Activated T-helper 1 cell treated with anti-CD3 and anti-CD28 coated beads, Interleukin-12 subunit alpha, Interleukin-12 subunit beta, Interleukin-2, Interleukin-4 antibody, amounts not matched to agents 30 ng/mL and 10 ng/mL and 1 ng/mL, durations not matched to agents 14 hours and 24 hours and 36 hours (primary cell): ENCODE measurements at regions of chr18 and their contacts with region 1.

Region 1: DNA sequence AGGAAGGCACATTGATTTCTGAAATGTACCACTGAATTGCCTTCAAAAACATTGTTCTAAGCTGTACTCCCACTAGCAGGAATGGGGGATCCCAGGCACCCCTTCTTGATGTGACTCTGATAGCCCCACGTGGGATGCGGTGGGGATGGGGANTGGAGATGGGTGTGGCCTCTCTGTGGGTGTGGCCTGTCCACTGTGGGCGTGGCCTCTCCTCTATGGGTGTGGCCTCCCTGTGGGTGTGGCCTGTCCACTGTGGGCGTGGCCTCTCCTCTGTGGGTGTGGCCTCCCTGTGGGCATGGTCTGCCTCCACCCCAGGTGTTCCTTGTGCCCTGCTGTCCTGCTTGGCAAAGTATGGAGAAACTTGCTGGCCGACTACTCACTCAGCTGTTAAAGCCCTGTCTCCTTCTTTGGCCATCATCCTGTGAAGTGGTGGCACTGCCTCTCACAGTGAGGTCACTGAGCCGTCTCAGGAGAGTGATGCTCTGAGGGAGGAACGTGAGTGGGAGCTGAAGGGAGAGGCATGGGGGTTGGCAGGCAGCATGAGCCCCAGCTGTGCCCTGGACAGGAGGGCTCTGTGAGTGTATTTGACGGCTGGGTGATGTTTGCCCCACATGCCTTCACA is 6.7 kb upstream of the PARD6G start:
- DNase-seq: no peak
- H3K4me3 Mint-ChIP-seq: no peak overlapping the region
- H3K27ac Mint-ChIP-seq: no peak overlapping the region
- H3K4me1 Mint-ChIP-seq: no peaks in the 10 kb centered on the region
- H3K27me3 Mint-ChIP-seq: peaks cover 10% of the 10 kb centered on the region

Region 2: DNA sequence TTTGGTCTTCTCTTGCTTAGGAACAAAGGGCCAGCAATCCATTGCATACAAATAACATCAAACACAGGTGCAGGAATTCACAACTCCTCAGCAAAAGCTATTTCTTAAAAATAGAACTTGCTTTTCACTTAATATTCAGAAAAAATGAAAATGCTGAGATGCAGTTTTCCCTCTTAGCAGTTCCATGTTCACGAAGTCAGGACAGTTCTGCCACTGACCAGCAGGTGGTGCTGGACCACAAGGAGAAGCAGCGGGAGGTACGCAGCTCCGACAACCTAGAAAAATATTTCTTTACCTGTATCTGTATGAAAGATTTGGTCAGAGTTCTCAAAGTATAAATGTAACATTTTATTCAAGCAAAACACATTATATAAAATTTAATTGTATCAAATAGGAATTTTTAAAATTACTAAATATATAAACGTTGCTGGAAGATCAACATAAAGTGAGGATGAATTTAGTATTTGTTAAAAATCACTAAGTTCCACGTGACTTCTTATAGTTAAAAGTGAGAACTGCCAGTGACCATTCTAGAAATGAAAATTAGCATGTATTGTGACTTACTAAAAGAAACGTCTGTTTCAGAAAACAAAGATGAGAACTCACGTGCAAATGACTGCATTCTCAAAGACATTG is 96.2 kb before region 1 on chr18:
- intact Hi-C with region 1: loop called (anchors 1 kb)
- DNase-seq: peak; percentile 45
- H3K4me3 Mint-ChIP-seq: no peak overlapping the region
- H3K27ac Mint-ChIP-seq: no peak overlapping the region
- H3K4me1 Mint-ChIP-seq: no peaks in the 10 kb centered on the region
- H3K27me3 Mint-ChIP-seq: peaks cover 9% of the 10 kb centered on the region

Region 3: GRCh38 chr18:80171054-80171872 is 82.7 kb before region 1 on chr18:
- intact Hi-C with region 1: loop called (anchors 1 kb)
- DNase-seq: no peak
- H3K4me3 Mint-ChIP-seq: no peak overlapping the region
- H3K27ac Mint-ChIP-seq: no peak overlapping the region
- H3K4me1 Mint-ChIP-seq: peaks cover 9% of the 10 kb centered on the region
- H3K27me3 Mint-ChIP-seq: peaks cover 17% of the 10 kb centered on the region

Region 4: DNA sequence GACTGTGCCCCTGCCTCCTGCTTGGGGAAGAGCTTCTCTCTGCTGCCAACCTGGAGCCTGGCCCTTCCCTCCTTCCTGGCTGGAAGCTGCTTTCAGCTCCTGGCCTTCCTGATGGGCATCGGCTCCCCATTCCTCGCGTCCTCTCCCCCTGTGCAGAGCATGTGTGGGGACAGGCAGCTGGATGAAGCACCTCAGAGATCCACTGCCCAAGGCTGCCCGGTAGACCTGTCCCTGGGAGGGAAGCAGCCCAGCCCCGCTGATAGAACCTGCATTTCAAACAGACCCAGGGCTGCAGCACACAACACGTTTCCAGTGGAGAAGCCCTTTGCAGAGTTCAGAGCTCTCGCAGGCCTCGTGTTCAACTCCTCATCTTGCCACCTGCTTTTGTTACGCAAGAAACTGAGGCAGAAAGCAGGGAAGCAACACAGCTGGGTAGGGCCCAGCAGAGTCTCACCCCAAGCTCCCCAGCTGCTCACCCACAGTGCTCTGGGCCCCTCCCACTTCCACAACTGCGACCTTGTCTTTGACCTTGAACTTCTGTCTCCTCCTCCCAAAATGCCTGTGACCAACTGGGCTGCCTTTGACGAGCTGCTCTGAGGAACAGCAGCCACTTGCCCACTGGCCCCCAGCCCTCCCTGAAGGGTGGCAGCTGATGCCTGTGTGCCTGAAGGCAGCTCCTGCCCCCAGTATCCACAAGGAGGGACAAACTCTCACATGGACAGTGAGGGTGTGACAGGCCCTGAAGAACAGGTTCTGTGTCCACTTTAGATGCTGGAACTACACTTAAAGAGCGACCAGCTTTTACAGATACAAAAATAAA is 72.1 kb before region 1 on chr18:
- intact Hi-C with region 1: no loop called
- DNase-seq: no peak
- H3K4me3 Mint-ChIP-seq: no peak overlapping the region
- H3K27ac Mint-ChIP-seq: no peak overlapping the region
- H3K4me1 Mint-ChIP-seq: no peaks in the 10 kb centered on the region
- H3K27me3 Mint-ChIP-seq: no peaks in the 10 kb centered on the region

Region 5: DNA sequence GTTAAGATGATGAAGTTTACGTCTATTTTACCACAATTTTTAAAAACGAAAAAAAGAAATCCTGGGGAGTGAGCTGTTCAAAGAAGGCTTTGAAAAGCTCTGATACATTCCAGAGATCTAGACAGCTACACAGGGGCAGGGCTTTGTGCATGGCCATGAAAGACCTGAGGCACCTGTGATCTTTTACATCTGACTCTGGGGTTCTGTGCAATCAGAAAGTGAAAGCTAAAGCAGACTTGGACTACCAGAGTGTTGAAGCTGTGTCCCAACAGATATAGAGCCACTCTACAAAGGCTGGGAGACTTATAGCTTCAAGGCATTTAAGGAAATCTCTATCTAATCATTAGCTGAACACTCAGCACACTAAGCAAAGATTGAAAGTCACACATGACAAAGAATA is 40.8 kb before region 1 on chr18:
- intact Hi-C with region 1: no loop called
- DNase-seq: no peak
- H3K4me3 Mint-ChIP-seq: no peak overlapping the region
- H3K27ac Mint-ChIP-seq: no peak overlapping the region
- H3K4me1 Mint-ChIP-seq: no peaks in the 10 kb centered on the region
- H3K27me3 Mint-ChIP-seq: peaks cover 5% of the 10 kb centered on the region